IMR-90 (cell line): ENCODE measurements at regions of chr11 and their contacts with region 1.

Region 1: DNA sequence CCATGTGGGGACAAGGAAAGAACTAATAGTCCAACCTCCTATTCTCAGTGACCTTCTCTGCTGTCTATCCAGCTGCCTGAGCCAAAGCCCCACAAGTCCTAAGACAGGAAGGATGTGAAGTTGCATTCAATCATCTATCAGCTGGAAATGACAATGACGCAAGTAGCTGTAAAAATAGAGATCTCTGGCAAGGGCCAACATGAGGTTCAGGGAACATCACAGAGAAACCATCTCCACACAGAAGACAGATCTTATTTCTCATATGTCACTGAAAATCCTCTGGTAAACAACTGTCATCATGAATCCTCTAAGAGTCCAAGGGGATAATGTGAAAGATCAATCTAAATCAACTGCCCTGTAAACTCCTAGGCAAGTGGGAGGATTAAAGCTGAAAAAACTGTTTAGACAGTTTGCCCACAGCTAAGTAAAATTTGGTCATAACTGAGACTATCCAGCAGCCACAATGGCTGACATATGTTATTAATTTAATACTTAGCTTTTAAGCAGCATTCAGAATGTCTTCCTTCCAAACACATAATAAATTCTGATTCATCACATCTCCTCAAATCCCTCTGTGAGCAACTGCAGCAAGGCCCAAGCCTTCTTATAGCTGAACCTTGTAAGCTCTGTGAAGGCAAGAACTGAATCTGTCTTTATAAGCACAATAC is 52.1 kb downstream of the ALG9 start:
- DNase-seq: peak; percentile 82
- ATAC-seq: peak; percentile 76
- H3K4me3 ChIP-seq: no peak overlapping the region
- H3K27ac ChIP-seq: peak overlapping the region; percentile 18; the same call in 1 of the 2 replicates
- H3K4me1 ChIP-seq: peaks cover 14% of the 10 kb centered on the region
- H3K27me3 ChIP-seq: no peaks in the 10 kb centered on the region
- CTCF ChIP-seq: no peak
- POLR2A ChIP-seq: no peak
- RAD21 ChIP-seq: no peak

Region 2: GRCh38 chr11:110311783-110312579 is 1507.3 kb before region 1 on chr11:
- CTCF ChIA-PET with region 1: no interaction called
- POLR2A ChIA-PET with region 1: no interaction called
- dilution Hi-C with region 1: no loop called
- in situ Hi-C with region 1: no loop called
- intact Hi-C with region 1: no loop called
- DNase-seq: peak; percentile 75
- ATAC-seq: peak; percentile 59
- H3K4me3 ChIP-seq: no peak overlapping the region
- H3K27ac ChIP-seq: no peak overlapping the region
- H3K4me1 ChIP-seq: peaks cover 2% of the 10 kb centered on the region; the same call in 1 of the 2 replicates
- H3K27me3 ChIP-seq: no peaks in the 10 kb centered on the region; the same call in 1 of the 2 replicates
- CTCF ChIP-seq: no peak
- POLR2A ChIP-seq: no peak
- RAD21 ChIP-seq: no peak

Region 3: GRCh38 chr11:111612224-111612623 is 207.1 kb before region 1 on chr11:
- CTCF ChIA-PET with region 1: interaction called, 10 read pairs
- POLR2A ChIA-PET with region 1: no interaction called
- dilution Hi-C with region 1: no loop called
- in situ Hi-C with region 1: no loop called
- intact Hi-C with region 1: no loop called
- DNase-seq: peak; percentile 78
- ATAC-seq: peak; percentile 84
- H3K4me3 ChIP-seq: no peak overlapping the region
- H3K27ac ChIP-seq: peak overlapping the region; percentile 87; the same call in 1 of the 2 replicates
- H3K4me1 ChIP-seq: peaks cover 5% of the 10 kb centered on the region
- H3K27me3 ChIP-seq: no peaks in the 10 kb centered on the region
- CTCF ChIP-seq: no peak
- POLR2A ChIP-seq: no peak
- RAD21 ChIP-seq: no peak

Region 4: DNA sequence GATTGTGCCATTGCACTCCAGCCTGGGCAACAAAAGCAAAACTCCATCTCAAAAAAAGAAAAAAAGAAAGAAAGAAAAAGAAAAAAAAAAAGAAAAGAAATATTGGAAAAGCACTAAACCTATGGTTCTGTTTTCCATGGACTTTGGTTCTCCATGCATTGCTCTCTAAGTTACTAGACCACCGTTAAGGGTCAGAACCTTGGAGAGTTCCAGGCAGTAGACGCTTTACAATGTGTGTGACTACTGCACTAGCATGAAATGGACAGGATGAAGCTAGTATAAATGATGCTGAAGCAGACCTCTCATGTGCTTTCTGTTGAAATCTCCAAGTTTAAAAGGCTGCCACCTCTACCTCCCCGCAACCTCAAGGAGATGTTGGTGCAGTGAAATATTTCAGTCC is 153.5 kb before region 1 on chr11:
- CTCF ChIA-PET with region 1: no interaction called
- POLR2A ChIA-PET with region 1: no interaction called
- dilution Hi-C with region 1: no loop called
- in situ Hi-C with region 1: no loop called
- intact Hi-C with region 1: no loop called
- DNase-seq: peak; percentile 71
- ATAC-seq: peak; percentile 54
- H3K4me3 ChIP-seq: no peak overlapping the region
- H3K27ac ChIP-seq: no peak overlapping the region
- H3K4me1 ChIP-seq: no peaks in the 10 kb centered on the region
- H3K27me3 ChIP-seq: no peaks in the 10 kb centered on the region
- CTCF ChIP-seq: no peak
- POLR2A ChIP-seq: no peak
- RAD21 ChIP-seq: no peak